GM12878 (cell line): ENCODE measurements at regions of chr4 and their contacts with region 1.

Region 1: GRCh38 chr4:76148142-76148865 is at the start of gene NUP54:
- DNase-seq: peak; percentile 92
- ATAC-seq: peak; percentile 97
- H3K4me3 ChIP-seq: peak within 1 kb of the TSS; percentile 89
- H3K27ac ChIP-seq: peak within 1 kb of the TSS; percentile 89
- H3K4me1 ChIP-seq: peaks cover 3% of the 10 kb centered on the region; the same call in 1 of the 2 replicates
- H3K27me3 ChIP-seq: no peaks in the 10 kb centered on the region
- CTCF ChIP-seq: no peak
- EP300 ChIP-seq: 0 out of 4 replicates have a peak, but pooled peaks of 1 of the 2 experiments have one; percentile 37
- POLR2A ChIP-seq: peak; percentile 95
- RAD21 ChIP-seq: no peak
- polyA plus RNA-seq, gene NUP54: 17.5 to 27.7 TPM

Region 2: DNA sequence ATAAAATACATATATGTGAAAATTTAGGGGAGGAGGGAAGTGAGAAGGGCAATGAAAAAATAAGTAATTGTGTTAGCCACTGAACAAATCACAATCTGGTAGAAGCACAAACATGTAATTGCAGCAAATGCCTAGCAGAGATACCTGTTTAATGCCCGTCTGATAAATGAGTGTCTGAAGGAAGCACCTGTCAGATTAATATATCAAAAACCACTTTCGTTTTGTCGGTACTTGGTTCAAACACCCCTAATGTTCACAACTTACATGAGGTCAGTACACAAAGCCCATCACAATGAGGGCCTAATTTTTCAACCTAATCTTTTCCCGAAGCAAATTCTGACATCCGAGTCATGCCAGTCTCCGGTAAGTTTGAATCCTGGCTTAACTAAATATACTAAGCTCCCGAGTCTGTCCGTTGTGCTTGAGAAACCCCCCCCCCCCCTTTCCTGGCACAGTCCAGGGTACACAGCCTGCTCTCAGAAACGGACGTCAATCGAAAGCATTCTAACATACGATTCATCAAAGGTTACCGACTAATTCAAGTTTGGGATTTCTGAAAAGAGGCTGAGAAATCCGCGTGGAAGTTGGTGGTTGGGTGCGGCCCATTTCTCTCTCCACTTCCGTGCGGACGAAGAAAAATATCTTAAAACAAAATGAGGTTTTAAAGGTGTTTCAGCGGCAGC is 158.3 kb before region 1 on chr4:
- CTCF ChIA-PET with region 1: no interaction called
- POLR2A ChIA-PET with region 1: no interaction called
- RAD21 ChIA-PET with region 1: no interaction called
- SMC1A ChIA-PET with region 1: interaction called, 3 read pairs
- in situ Hi-C with region 1: no loop called
- intact Hi-C with region 1: loop called (anchors 1 kb)
- DNase-seq: no peak
- ATAC-seq: peak; percentile 28
- H3K4me3 ChIP-seq: peak overlapping the region; percentile 88
- H3K27ac ChIP-seq: peak overlapping the region; percentile 72
- H3K4me1 ChIP-seq: no peaks in the 10 kb centered on the region; the same call in 1 of the 2 replicates
- H3K27me3 ChIP-seq: no peaks in the 10 kb centered on the region; a peak in 1 of 4 replicates
- CTCF ChIP-seq: no peak
- EP300 ChIP-seq: no peak
- POLR2A ChIP-seq: no peak
- RAD21 ChIP-seq: no peak